ENCODE measurements at regions of chr20 and their contacts with region 1.

Region 1: GRCh38 chr20:3820048-3820900 is at the start of gene AP5S1:
- DNase-seq: peak; percentile 81 to 94 (median 84)
- ATAC-seq: peak; percentile 89
- H3K4me3 ChIP-seq: peak within 1 kb of the TSS; percentile 82
- H3K27ac ChIP-seq: peak within 1 kb of the TSS; percentile 100
- H3K4me1 ChIP-seq: peaks cover 18 to 29% of the 10 kb centered on the region in 2 experiments
- H3K27me3 ChIP-seq: no peaks in the 10 kb centered on the region
- CTCF ChIP-seq: peak; percentile 84 to 93 (median 91)
- EP300 ChIP-seq: no peak
- POLR2A ChIP-seq: peak; percentile 78
- RAD21 ChIP-seq: peak; percentile 69 to 86
- polyA plus RNA-seq, gene AP5S1: 3.0 to 3.1 TPM

Region 2: DNA sequence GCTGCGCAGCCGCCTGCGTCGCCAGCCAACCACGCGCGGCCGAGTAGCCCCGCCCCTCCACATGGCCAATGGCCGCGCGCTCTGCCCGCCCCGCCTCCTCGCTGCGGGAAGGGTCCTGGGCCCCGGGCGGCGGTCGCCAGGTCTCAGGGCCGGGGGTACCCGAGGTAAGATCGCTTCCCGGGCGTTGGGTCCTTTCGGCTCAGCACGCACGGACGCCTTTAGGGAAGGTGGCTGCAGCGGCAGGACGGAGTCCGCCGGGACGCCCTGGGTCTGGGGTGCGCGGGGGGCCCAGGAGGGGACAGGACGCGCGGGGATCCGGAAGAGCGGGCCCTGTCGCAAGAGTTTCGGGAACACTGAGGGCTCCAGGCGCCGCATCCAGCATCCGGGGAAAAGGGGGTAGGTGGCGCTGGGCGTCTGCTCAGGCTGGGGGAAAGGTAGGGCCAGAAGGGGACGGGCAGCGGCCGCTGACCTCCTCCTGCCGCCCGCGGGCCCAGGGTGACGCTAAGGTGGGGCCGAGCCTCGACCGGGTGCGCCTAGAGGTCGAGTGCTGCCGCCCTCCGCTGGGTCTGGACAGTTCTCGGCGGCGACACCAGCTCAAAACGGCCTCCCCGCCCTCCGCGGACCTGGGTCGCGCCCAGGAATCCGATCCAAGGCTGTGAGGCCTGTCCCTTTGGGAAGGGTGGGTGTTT is 26.6 kb after region 1 on chr20 and contains the start of gene MAVS:
- CTCF ChIA-PET with region 1: no interaction called
- POLR2A ChIA-PET with region 1: interaction called, 13 read pairs
- in situ Hi-C with region 1: no loop called
- intact Hi-C with region 1: loop called (anchors 2 kb)
- DNase-seq: peak; percentile 87 to 90 (median 88)
- ATAC-seq: peak; percentile 94
- H3K4me3 ChIP-seq: peak within 1 kb of the TSS; percentile 81
- H3K27ac ChIP-seq: peak within 1 kb of the TSS; percentile 88
- H3K4me1 ChIP-seq: peaks cover 33 to 44% of the 10 kb centered on the region in 2 experiments; a peak in 4 of 5 replicates
- H3K27me3 ChIP-seq: no peaks in the 10 kb centered on the region
- CTCF ChIP-seq: peak in 2 of 3 experiments; percentile 32 to 38; a peak in 3 of 6 replicates
- EP300 ChIP-seq: no peak
- POLR2A ChIP-seq: peak; percentile 84
- RAD21 ChIP-seq: peak; percentile 35 to 36
- polyA plus RNA-seq, gene MAVS: 1.6 to 1.8 TPM

Region 3: DNA sequence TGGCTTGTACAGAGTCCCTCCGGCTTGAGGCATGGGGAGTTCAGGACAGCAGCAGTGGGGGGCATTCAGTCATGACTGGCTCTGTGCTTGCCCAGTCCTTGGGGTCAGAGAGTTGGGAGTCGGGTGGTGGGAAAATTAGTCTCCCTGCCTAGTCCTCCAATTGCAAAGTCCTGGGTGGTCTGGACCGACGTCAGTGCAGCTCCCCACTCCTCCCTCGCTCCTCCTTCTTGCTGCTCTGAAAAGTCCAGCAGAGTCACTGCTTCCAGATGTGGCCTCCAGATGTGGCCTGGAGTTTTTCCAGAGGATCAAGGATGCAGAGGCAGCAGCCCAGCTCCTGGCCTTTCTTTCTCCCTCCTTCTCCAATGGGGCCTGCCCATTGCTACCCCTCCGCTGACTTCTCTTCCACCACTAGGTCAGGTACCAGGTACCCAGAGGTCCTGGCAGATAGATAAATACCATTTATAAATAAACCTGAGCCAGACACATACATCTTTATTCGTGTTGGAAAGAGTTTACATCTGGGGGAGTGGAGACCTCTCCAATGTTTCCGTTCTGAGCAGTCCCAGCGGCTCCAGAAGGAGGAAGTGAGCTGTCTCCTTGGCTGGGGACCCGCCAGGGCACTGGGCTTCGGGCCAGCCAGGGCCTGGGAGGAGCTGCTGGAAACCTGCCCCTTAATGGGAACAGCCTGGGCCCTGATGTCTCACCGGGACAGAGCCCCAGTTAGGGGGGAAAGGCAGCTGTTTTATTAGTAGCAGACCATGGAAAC is 244.1 kb after region 1 on chr20:
- CTCF ChIA-PET with region 1: no interaction called
- POLR2A ChIA-PET with region 1: no interaction called
- in situ Hi-C with region 1: no loop called
- intact Hi-C with region 1: no loop called
- DNase-seq: peak; percentile 39 to 76 (median 56)
- ATAC-seq: peak; percentile 78
- H3K4me3 ChIP-seq: no peak overlapping the region
- H3K27ac ChIP-seq: peak overlapping the region; percentile 74
- H3K4me1 ChIP-seq: peaks cover 35 to 58% of the 10 kb centered on the region in 2 experiments
- H3K27me3 ChIP-seq: no peaks in the 10 kb centered on the region
- CTCF ChIP-seq: no peak
- EP300 ChIP-seq: no peak
- POLR2A ChIP-seq: no peak
- RAD21 ChIP-seq: no peak